IMR-90 (cell line): ENCODE measurements at regions of chr10 and their contacts with region 1.

Region 1: DNA sequence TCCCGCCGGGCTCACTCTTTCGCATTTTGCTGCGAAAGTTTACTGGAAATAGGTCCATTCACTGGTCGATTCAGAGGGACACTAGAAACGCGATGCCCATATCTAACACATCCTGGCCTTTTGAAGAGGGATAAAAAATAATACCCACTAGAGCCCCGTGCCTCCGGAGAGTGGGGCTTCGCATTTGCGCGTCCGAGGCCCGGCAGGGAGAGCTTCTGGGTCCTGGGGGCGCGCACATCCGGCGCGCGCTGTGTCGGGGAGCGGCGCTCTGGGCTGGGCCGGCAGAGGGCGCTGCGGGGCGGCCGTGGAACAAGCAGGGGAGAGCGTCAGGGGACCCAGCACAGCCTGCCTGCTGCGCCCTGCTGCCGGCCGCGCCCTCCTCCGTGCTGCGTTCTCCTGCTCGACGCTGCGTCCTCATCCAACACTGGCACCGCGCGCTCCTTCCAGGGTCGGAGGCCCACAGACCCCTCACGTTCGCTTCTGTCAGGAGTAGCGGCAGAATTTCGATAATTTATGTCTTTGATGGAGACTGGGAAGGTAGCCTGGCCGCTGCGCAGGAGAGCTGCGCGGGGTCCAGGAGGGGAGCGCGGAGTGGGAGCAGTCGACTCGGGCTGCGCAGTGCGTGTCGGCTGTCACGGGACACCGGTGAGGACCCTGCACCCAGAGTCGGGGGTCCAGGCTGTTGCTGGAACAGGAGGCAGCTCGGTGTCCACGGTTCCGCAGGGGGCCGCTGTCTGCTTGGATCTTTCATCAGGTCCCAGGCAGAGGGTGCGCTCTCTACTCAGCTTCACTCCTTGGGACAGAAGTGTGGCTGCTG is 41.5 kb upstream of the ZNF32 start:
- DNase-seq: peak; percentile 72
- ATAC-seq: peak; percentile 98
- H3K4me3 ChIP-seq: peak overlapping the region; percentile 61
- H3K27ac ChIP-seq: peak overlapping the region; percentile 76
- H3K4me1 ChIP-seq: peaks cover 8% of the 10 kb centered on the region; the same call in 1 of the 2 replicates
- H3K27me3 ChIP-seq: no peaks in the 10 kb centered on the region
- CTCF ChIP-seq: peak; percentile 88
- POLR2A ChIP-seq: peak; percentile 42; the same call in 1 of the 2 replicates
- RAD21 ChIP-seq: peak; percentile 87

Region 2: DNA sequence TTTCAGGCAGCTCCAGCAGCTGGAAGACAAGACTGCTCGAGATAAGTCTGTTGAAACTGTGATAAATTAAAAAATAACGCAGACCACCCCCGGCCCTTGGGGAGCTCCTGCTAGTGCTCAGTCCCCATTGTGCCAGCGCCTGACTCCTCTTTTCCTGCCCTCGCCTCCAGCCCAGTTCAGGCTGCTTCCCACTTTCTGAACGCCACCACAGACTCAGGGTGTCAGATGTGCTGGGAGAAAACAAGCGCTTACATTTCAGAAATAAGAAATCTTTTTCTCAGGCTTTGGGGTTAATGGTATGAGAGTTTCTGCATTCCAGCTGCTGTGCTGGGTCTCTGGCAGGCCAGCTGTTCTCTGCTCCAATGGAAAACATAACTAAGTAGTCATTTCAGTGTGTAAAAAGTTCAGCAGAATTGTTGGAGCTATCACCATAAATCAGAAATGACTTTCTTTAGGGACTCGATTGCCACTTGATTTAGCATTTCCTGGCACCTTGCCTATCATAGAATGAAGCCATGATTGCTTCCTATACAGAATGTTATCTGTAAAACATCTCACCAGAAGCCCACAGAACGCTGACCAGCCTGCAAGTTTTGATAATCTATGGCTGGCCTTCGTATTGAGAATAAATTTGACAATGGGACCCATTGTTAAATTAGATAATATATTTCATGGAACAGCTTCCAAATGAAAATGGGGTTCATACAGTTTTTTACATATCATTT is 215.5 kb after region 1 on chr10:
- CTCF ChIA-PET with region 1: no interaction called
- POLR2A ChIA-PET with region 1: no interaction called
- dilution Hi-C with region 1: no loop called
- in situ Hi-C with region 1: no loop called
- intact Hi-C with region 1: loop called (anchors 10 kb)
- DNase-seq: peak; percentile 68
- ATAC-seq: peak; percentile 81
- H3K4me3 ChIP-seq: no peak overlapping the region
- H3K27ac ChIP-seq: peak overlapping the region; percentile 59; the same call in 1 of the 2 replicates
- H3K4me1 ChIP-seq: peaks cover 25% of the 10 kb centered on the region
- H3K27me3 ChIP-seq: no peaks in the 10 kb centered on the region
- CTCF ChIP-seq: no peak
- POLR2A ChIP-seq: no peak
- RAD21 ChIP-seq: no peak

Region 3: GRCh38 chr10:44071479-44071878 is 381.3 kb after region 1 on chr10:
- CTCF ChIA-PET with region 1: interaction called, 11 read pairs
- POLR2A ChIA-PET with region 1: no interaction called
- dilution Hi-C with region 1: no loop called
- in situ Hi-C with region 1: no loop called
- intact Hi-C with region 1: loop called (anchors 1 kb)
- DNase-seq: peak; percentile 90
- ATAC-seq: peak; percentile 84
- H3K4me3 ChIP-seq: no peak overlapping the region
- H3K27ac ChIP-seq: no peak overlapping the region
- H3K4me1 ChIP-seq: no peaks in the 10 kb centered on the region; the same call in 1 of the 2 replicates
- H3K27me3 ChIP-seq: peaks cover 4% of the 10 kb centered on the region; the same call in 1 of the 2 replicates
- CTCF ChIP-seq: no peak; the same call in 1 of the 2 replicates
- POLR2A ChIP-seq: no peak
- RAD21 ChIP-seq: no peak

Region 4: GRCh38 chr10:44310762-44311562 is 620.8 kb after region 1 on chr10:
- CTCF ChIA-PET with region 1: interaction called, 6 read pairs
- POLR2A ChIA-PET with region 1: no interaction called
- dilution Hi-C with region 1: no loop called
- in situ Hi-C with region 1: loop called (anchors 5 kb)
- intact Hi-C with region 1: loop called (anchors 1 kb)
- DNase-seq: peak; percentile 79
- ATAC-seq: peak; percentile 100
- H3K4me3 ChIP-seq: no peak overlapping the region
- H3K27ac ChIP-seq: no peak overlapping the region
- H3K4me1 ChIP-seq: peaks cover 6% of the 10 kb centered on the region
- H3K27me3 ChIP-seq: peaks cover 1% of the 10 kb centered on the region
- CTCF ChIP-seq: peak; percentile 98
- POLR2A ChIP-seq: no peak
- RAD21 ChIP-seq: peak; percentile 88